ENCODE measurements at regions of chr1 and their contacts with region 1.

Region 1: DNA sequence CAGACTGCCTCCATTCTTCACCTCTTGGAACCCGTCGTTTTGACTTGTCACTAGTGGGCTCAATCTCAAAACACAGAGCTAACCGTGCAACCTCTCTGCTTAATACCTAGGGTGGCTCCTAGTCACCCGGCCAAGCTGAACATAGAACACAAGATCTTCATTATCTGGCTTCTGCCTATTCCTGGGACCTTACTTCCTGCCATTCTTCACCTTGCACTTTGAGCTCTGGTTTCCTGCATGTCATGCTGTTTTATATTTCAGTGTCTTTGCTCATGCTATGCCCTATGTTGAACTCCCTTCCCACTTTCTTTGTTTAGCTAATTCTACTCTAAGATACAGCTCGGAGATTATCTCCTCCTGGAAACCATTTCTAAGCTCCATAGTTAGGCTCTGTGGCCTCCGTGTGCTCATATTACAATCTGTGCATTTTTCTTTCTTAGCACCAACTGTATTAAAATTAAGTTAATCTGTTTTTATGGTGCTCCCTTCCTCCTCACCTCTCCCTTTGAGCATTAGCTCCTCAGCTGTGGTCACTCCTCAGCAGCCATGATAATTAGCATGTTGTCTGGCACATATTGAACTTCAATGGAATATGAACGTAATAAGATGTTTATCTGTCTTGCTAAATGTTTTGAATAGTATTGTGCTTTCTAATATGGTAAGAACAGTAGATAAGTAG is 13.1 kb downstream of the GPSM2 start:
- DNase-seq: no peak
- ATAC-seq: no peak
- H3K4me3 Mint-ChIP-seq: no peak overlapping the region
- H3K27ac Mint-ChIP-seq: no peak overlapping the region
- H3K4me1 Mint-ChIP-seq: peaks cover 13% of the 10 kb centered on the region
- H3K27me3 Mint-ChIP-seq: no peaks in the 10 kb centered on the region
- CTCF ChIP-seq: no peak

Region 2: GRCh38 chr1:108551137-108551862 is 338.5 kb before region 1 on chr1:
- CTCF ChIA-PET with region 1: no interaction called
- POLR2A ChIA-PET with region 1: interaction called, 10 read pairs
- DNase-seq: no peak
- ATAC-seq: no peak
- H3K4me3 Mint-ChIP-seq: no peak overlapping the region
- H3K27ac Mint-ChIP-seq: no peak overlapping the region
- H3K4me1 Mint-ChIP-seq: peaks cover 22% of the 10 kb centered on the region
- H3K27me3 Mint-ChIP-seq: no peaks in the 10 kb centered on the region; the same call in 1 of the 2 replicates
- CTCF ChIP-seq: no peak

Region 3: DNA sequence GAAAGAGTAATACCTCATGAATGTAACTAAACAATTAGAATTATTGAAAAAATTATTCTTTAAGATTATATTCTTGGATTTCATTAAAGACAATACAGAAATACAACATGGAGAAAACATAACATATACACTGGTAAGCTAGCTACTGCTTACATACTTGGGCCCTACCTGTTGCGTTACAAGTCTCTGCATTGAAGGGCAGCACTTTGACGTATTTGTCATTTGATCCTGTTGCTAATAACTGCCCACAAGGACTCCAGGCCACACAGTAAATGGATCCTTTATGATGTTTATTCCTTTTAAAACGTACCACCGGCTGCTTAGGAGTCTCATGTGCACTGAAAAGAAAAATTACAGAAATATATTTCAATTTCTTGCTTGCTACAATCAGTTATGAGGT is 93.3 kb after region 1 on chr1:
- CTCF ChIA-PET with region 1: no interaction called
- POLR2A ChIA-PET with region 1: no interaction called
- DNase-seq: no peak
- ATAC-seq: no peak
- H3K4me3 Mint-ChIP-seq: no peak overlapping the region
- H3K27ac Mint-ChIP-seq: no peak overlapping the region
- H3K4me1 Mint-ChIP-seq: peaks cover 13% of the 10 kb centered on the region
- H3K27me3 Mint-ChIP-seq: no peaks in the 10 kb centered on the region
- CTCF ChIP-seq: no peak